ENCODE measurements at regions of chr18 and their contacts with region 1.

Region 1: DNA sequence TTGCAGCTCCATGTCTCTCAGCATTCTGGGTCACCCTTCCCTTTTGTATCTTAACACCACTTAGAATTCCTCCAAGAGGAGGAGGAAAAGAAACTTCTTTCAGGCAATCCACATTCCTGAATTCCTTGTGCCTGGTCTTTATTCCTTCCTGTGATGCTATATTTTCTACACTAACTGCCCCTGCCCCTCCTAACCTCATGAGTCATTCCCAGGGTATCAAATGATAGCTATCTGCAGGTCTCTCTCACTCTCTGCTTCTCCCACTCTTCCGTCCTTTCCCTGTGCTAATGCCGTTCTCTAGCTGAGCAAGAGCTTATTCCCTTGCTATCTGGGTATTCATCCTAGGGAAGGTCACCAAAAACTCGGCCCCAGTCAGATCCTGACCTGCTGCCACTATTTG is 395.0 kb upstream of the TCF4 start:
- DNase-seq: no peak

Region 2: DNA sequence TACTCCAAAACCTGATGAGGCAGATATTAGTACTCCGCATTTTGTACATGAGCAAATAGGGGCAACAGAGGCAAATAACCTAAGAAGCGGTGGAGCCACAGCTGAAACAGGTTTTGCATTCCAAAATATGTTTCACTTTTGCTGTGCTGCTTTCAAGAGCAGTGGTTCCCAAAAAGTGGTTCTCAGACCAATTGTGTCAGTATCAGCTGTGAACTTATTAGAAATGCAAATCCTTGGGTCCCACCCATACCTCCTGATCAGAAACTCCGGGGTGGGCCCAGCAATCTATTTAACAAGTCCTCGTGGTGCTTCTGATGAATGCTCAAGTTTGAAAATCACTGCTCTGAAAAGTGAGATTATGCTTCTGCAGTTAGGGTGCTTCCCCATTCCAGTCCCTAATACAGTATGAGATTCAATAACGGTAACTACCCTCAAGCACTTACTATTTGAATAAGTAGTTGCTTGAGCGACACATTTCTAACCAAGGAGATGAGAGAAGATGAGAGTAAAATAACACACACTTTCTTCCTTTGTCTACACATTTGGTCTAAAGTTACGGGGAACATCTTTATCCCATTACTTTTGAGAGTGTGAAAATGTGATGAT is 377.2 kb before region 1 on chr18:
- intact Hi-C with region 1: no loop called
- DNase-seq: no peak

Region 3: DNA sequence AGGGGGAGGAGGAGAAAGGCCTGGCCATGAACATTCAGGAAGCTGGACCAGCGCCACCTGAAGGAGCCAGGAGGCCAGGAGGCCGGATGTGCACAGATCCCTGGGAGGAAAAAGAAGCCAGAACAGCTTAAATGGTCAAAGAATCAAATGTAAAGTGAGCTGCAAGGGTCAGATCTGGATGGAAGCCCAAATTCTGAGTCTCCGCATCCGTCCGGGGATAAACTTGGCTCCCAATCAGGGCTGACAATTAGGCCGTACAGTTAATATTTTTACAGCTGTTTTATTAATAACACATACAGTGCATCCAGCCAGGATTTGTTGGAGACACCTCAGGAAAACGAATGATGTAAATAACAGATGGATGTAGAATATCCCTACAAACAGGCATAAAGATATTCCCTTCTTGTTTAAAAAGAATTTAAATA is 100.1 kb after region 1 on chr18:
- intact Hi-C with region 1: loop called (anchors 5 kb)
- DNase-seq: peak; percentile 78

Measured in cardiac septum (tissue), 1 donor.